Dorsolateral prefrontal cortex (tissue), 120 donors: ENCODE measurements at regions of chr9 and their contacts with region 1.

Region 1: GRCh38 chr9:73023025-73023541 is 70.2 kb upstream of the ALDH1A1 start:
- DNase-seq: peak in 1 of 10 donors; percentile 42
- H3K4me3 ChIP-seq: no peak overlapping the region
- H3K27ac ChIP-seq: no peak overlapping the region
- H3K27me3 ChIP-seq: no peaks in the 10 kb centered on the region
- CTCF ChIP-seq: peak; percentile 55 to 86 (median 75)

Region 2: DNA sequence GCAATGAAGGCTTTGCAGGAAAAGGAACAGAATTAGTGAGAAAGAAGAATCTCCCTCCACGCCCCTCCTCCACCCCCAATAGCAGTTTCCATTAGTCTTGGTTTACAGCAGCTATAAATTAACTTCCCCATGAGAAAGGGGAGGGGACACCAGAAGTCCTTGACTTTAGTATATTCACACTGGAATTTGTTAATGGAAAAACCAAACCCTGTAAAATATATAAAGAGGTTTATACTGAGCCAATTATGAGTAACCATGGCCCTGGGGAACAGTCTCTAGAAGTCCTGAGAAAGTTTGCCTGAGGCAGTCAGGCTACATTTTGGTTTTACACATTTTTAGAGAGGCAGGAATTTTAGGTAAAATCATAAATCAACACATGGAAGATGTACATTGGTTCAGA is 158.8 kb before region 1 on chr9:
- intact Hi-C with region 1: loop called (anchors 5 to 10 kb)
- DNase-seq: no peak
- H3K4me3 ChIP-seq: no peak overlapping the region
- H3K27ac ChIP-seq: no peak overlapping the region
- H3K27me3 ChIP-seq: no peaks in the 10 kb centered on the region
- CTCF ChIP-seq: no peak

Region 3: GRCh38 chr9:73081979-73082657 is 59.0 kb after region 1 on chr9:
- intact Hi-C with region 1: no loop called
- DNase-seq: peak in 1 of 10 donors; percentile 6
- H3K4me3 ChIP-seq: no peak overlapping the region
- H3K27ac ChIP-seq: peak overlapping the region in 7 of 59 donors; percentile 2 to 53 (median 13)
- H3K27me3 ChIP-seq: no peaks in the 10 kb centered on the region
- CTCF ChIP-seq: peak in 55 of 56 donors; percentile 52 to 85 (median 73)